ENCODE measurements at regions of chr3 and their contacts with region 1.

Region 1: DNA sequence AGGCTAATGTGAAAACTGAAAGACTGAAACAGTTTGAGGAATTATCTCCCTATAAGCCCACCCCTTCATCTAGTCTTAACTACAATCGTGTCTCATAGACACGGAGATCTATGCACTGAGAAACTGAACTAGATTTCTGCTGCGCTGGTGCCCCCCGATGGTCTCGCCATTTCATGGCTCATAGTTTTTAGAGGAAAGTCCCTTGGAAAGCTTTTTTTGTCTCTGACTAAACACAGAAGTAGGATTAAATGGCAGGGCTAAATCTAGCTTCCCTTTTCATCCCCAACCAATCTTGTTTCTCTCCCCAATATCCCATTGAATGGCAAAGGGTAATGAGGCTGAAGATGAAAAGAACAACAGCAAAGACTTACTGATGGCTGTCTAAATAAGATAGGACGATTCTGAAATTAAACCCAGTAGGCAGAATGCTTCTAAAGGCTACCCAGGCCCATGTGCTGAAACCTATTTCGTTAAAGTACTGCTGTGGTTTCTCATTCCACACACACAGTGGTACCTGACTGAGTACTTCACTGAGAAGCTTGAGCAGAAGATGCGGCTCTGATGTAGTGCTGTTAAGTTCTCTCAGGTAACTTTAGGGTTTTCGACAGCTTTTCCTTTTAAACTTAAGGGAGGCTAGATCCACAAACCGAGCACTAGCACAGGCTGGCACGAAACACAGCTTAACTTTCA is 142.7 kb downstream of the GADL1 start:
- DNase-seq: peak; percentile 83
- H3K4me3 Mint-ChIP-seq: no peak overlapping the region
- H3K27ac Mint-ChIP-seq: no peak overlapping the region
- H3K4me1 Mint-ChIP-seq: peaks cover 36% of the 10 kb centered on the region
- H3K27me3 Mint-ChIP-seq: no peaks in the 10 kb centered on the region

Region 2: GRCh38 chr3:30012941-30013543 is 738.7 kb before region 1 on chr3:
- intact Hi-C with region 1: loop called (anchors 5 kb)
- DNase-seq: peak; percentile 79
- H3K4me3 Mint-ChIP-seq: no peak overlapping the region
- H3K27ac Mint-ChIP-seq: no peak overlapping the region
- H3K4me1 Mint-ChIP-seq: peaks cover 3% of the 10 kb centered on the region
- H3K27me3 Mint-ChIP-seq: peaks cover 7% of the 10 kb centered on the region

Region 3: GRCh38 chr3:30042274-30042859 is 709.4 kb before region 1 on chr3:
- intact Hi-C with region 1: loop called (anchors 1 kb)
- DNase-seq: peak; percentile 86
- H3K4me3 Mint-ChIP-seq: no peak overlapping the region
- H3K27ac Mint-ChIP-seq: no peak overlapping the region
- H3K4me1 Mint-ChIP-seq: no peaks in the 10 kb centered on the region
- H3K27me3 Mint-ChIP-seq: peaks cover 27% of the 10 kb centered on the region

Region 4: GRCh38 chr3:30112902-30113484 is 638.8 kb before region 1 on chr3:
- intact Hi-C with region 1: loop called (anchors 2 kb)
- DNase-seq: peak; percentile 58
- H3K4me3 Mint-ChIP-seq: no peak overlapping the region
- H3K27ac Mint-ChIP-seq: no peak overlapping the region
- H3K4me1 Mint-ChIP-seq: peaks cover 3% of the 10 kb centered on the region
- H3K27me3 Mint-ChIP-seq: peaks cover 17% of the 10 kb centered on the region

Measured in activated CD4-positive, alpha-beta T cell treated with anti-CD3 and anti-CD28 coated beads, Interleukin-2, amount 10 ng/mL, durations not matched to agents 24 days and 14 days (primary cell).